HEK293 (cell line): ENCODE measurements at regions of chr2 and their contacts with region 1.

Region 1: GRCh38 chr2:133286326-133286922 is 281.8 kb downstream of the NCKAP5 start:
- H3K4me3 ChIP-seq: no peak overlapping the region
- H3K27ac ChIP-seq: no peak overlapping the region
- H3K4me1 ChIP-seq: no peaks in the 10 kb centered on the region
- CTCF ChIP-seq: no peak

Region 2: GRCh38 chr2:133360882-133361281 is 74.5 kb after region 1 on chr2:
- CTCF ChIA-PET with region 1: interaction called, 12 read pairs
- POLR2A ChIA-PET with region 1: no interaction called
- H3K4me3 ChIP-seq: no peak overlapping the region
- H3K27ac ChIP-seq: no peak overlapping the region
- H3K4me1 ChIP-seq: 0 out of 2 replicates have a peak, but pooled peaks cover 4% of the 10 kb centered on the region
- CTCF ChIP-seq: no peak